ENCODE measurements at regions of chr9 and their contacts with region 1.

Region 1: DNA sequence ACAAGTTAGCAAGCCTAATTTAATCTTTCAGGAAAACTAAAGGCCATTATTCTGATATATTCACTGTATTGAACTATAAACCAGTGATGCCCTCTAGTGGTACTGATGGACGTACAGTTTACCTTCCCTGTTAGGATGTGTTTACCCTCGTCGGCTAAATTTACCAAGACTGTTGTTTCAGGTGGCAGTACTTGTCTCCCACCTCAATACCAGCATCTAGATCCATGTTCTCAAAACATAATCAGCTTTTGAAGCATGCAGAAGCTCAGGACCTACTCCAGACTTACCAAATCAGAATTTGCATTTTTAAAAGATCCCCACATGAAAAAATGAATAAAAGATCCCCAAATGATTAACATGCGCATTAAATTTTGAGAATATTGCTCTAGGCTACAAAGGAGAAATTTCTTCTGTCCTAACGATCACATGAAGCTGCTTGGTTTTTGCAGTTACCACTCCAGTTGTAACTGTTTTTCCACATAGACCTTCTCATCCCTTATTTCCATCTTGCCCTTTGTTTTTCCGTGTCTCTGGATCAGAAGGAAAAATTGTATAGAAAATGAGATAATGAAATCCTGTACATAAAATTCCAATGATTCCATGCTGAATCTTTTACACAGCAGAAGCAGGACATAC is 3.2 kb upstream of the BAAT start:
- DNase-seq: no peak
- H3K4me3 Mint-ChIP-seq: no peak overlapping the region
- H3K27ac Mint-ChIP-seq: no peak overlapping the region
- H3K4me1 Mint-ChIP-seq: peaks cover 5% of the 10 kb centered on the region
- H3K27me3 Mint-ChIP-seq: no peaks in the 10 kb centered on the region

Region 2: DNA sequence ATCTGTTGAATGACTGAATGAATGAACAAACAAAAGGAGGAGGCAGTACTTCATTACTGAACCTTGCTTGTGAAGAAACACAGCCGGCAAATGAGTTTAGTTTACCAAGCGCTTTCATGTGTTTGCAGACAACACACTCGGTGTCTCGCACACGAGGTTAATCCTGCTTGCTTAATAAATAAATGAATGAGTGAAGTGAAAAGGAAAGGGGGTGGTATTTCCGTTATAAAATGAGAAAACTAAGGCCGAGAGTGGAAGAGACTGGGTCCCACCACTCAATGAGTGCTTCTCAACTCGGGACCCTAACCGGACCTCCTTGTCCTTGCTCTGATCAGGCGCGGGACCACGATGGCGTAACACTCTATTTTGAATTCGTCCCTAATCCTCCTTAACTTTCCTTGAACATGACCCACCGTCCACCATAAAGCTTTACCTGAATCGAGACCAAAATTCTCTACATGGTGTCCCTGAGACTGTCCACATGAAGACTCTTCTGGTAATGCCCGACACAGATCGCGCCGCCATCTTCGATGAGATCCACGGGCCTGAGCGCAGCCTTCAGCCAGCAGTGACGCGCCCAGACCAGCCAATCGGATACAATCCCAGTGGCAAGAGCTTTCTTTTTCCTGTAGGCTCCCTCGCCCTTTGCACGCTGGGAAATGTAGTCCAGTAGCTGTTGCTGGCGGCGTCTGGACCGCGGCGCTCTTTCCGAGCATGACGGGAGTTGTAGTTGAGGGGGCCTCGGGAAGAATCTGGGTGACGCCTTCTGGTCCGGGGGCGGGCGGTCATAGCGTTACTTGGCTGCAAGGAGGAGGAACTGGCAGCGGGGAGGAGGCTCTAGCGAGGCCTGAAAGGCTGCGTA is 10.3 kb after region 1 on chr9 and contains the starts of genes MRPL50 and ZNF189:
- CTCF ChIA-PET with region 1: interaction called, 13 read pairs
- DNase-seq: peak; percentile 98
- H3K4me3 Mint-ChIP-seq: peak within 1 kb of the TSS; percentile 96
- H3K27ac Mint-ChIP-seq: peak within 1 kb of the TSS; percentile 98
- H3K4me1 Mint-ChIP-seq: peaks cover 58% of the 10 kb centered on the region
- H3K27me3 Mint-ChIP-seq: peaks cover 3% of the 10 kb centered on the region

Region 3: DNA sequence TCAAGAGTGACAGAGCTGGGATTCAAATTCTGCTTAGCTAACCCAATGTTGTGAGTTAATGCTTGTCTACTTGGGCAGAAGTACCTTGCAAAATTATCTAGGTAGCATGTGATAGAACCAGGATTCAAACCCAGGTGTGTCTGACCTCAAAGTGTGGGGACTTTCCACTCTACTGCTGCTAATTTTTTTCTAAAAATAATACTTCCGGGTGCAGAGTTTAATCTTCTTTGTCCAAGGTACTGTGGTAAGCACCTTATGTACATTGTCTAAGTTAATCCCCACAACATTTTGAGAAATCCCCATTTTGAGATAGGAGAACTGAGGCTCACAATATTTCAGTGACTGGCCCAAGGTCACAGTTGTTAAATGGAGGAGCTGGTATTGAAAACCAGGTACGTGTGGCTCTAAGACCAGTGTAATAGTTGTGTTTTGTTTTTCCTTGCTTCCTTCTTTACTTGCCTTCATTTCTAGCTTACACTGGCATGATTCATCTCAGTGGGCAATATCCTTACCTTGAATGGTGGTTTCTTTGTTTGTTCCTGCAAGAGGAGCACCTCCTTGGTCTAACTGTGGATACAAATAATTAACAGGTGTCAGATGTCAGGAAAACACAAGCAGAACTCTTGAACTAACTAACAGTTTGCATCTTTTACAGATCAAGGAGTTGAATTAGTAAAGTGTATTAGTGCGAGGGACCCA is 40.1 kb after region 1 on chr9:
- CTCF ChIA-PET with region 1: no interaction called
- DNase-seq: no peak
- H3K4me3 Mint-ChIP-seq: no peak overlapping the region
- H3K27ac Mint-ChIP-seq: no peak overlapping the region
- H3K4me1 Mint-ChIP-seq: no peaks in the 10 kb centered on the region
- H3K27me3 Mint-ChIP-seq: peaks cover 8% of the 10 kb centered on the region